ENCODE measurements at regions of chr3 and their contacts with region 1.

Region 1: DNA sequence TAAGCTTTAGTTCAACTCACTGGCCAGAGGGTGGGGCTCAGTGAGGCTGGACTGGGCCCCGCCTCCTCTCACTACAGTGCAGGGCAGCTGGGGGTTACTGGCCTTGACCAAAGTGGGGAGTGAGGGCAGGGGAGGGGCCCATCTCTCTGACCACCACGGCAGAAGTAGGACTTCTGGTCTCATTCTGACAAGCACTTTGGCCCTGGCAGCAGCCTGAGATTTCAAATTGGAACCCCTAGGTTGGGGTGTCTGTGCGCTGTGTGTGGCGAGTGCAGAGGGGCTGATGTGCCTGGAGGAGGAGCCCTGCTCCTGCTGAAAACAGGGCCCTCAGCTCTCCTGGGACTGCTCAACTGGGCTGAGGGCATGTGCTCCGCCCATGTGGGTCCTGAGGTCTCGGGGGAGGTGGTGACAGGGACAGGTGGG is 60.3 kb upstream of the RPL32 start:
- DNase-seq: no peak

Region 2: DNA sequence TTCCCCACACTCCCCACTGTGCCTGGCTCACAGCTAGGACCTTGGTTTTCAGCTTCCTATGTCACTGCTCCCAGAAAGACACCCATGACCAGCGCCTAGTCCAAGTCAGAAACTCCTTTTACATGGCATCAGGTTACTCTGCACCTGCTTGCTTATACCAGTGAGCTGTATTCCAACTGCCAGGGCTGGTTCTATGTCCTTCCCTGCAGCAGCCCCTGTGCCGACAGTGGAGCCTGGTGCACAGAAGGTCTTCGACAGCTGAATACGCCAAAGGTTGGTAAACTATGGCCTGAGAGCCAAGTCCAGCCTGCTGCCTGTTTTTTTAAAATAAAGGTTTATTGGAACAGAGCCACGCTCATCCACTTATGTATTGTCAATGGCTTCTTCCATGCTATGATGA is 69.0 kb after region 1 on chr3:
- intact Hi-C with region 1: loop called in 1 of 2 experiments (anchors 10 kb)
- DNase-seq: no peak

Region 3: DNA sequence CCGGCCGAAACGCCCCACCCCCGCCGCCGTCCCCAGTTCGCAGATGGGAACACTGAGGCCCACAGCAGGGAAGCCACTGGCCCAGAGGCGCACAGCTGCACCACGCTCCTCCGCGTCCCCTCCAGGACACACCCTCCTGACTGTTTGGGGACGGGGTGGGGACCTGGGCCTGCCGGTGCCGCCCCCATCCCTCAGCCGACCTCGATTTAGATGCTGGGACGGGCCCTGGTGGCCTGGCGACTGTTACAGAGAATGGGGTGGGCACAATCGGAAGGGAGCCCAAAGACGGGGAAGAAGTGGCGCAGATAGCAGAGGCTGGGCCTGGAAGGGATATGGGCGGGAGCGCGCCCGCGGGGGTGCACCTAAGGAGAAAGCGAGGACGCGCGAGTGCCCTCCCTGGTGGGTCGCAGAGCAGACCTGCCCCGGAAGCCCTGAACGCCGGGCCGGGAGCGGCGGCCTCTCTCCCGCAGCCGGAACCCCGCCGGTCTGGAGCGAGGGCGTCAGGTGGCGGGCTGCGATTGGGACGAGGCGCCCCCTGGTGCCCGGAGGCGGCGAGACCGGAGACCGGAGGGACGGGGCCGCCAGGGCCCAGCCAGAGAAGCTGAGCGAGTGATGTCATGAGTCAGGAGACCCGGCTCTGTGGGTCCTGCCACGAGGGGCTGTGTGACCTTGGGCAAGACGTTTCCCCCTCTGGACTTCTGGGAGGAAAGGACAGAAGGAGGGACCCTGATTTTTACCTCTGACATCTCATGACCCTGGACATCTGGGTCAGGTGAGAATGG is 93.2 kb after region 1 on chr3:
- intact Hi-C with region 1: loop called in 1 of 2 experiments (anchors 5 kb)
- DNase-seq: peak; percentile 96